Ovary (tissue), 10 donors: ENCODE measurements at regions of chrX and their contacts with region 1.

Region 1: GRCh38 chrX:138794246-138794645 is 82.7 kb upstream of the FGF13 start:
- DNase-seq: no peak
- H3K4me3 ChIP-seq: no peak overlapping the region
- H3K27ac ChIP-seq: no peak overlapping the region
- H3K4me1 ChIP-seq: no peaks in the 10 kb centered on the region
- H3K27me3 ChIP-seq: no peaks in the 10 kb centered on the region
- CTCF ChIP-seq: no peak
- EP300 ChIP-seq: no peak
- POLR2A ChIP-seq: no peak

Region 2: GRCh38 chrX:137926090-137926489 is 868.2 kb before region 1 on chrX:
- intact Hi-C with region 1: no loop called
- DNase-seq: no peak
- H3K4me3 ChIP-seq: no peak overlapping the region
- H3K27ac ChIP-seq: no peak overlapping the region
- H3K4me1 ChIP-seq: no peaks in the 10 kb centered on the region
- H3K27me3 ChIP-seq: no peaks in the 10 kb centered on the region
- CTCF ChIP-seq: no peak
- EP300 ChIP-seq: no peak
- POLR2A ChIP-seq: no peak

Region 3: GRCh38 chrX:138847928-138848327 is 53.7 kb after region 1 on chrX:
- intact Hi-C with region 1: no loop called
- DNase-seq: no peak
- H3K4me3 ChIP-seq: no peak overlapping the region
- H3K27ac ChIP-seq: no peak overlapping the region
- H3K4me1 ChIP-seq: no peaks in the 10 kb centered on the region
- H3K27me3 ChIP-seq: no peaks in the 10 kb centered on the region
- CTCF ChIP-seq: no peak
- EP300 ChIP-seq: no peak
- POLR2A ChIP-seq: no peak

Region 4: GRCh38 chrX:138954976-138955375 is 160.7 kb after region 1 on chrX:
- intact Hi-C with region 1: loop called in 1 of 4 experiments (anchors 5 kb)
- DNase-seq: no peak
- H3K4me3 ChIP-seq: no peak overlapping the region
- H3K27ac ChIP-seq: no peak overlapping the region
- H3K4me1 ChIP-seq: no peaks in the 10 kb centered on the region
- H3K27me3 ChIP-seq: no peaks in the 10 kb centered on the region
- CTCF ChIP-seq: no peak
- EP300 ChIP-seq: no peak
- POLR2A ChIP-seq: no peak